CD4-positive, alpha-beta T cell (primary cell): ENCODE measurements at regions of chr19 and their contacts with region 1.

Region 1: GRCh38 chr19:11587302-11587974 is 9.8 kb upstream of the ZNF627 start:
- DNase-seq: peak; percentile 62 to 84 (median 72)
- ATAC-seq: peak; percentile 98
- H3K4me3 ChIP-seq: no peak overlapping the region
- H3K4me3 Mint-ChIP-seq: no peak overlapping the region
- H3K27ac ChIP-seq: no peak overlapping the region
- H3K27ac Mint-ChIP-seq: no peak overlapping the region
- H3K4me1 ChIP-seq: peaks cover 7% of the 10 kb centered on the region
- H3K4me1 Mint-ChIP-seq: no peaks in the 10 kb centered on the region
- H3K27me3 ChIP-seq: no peaks in the 10 kb centered on the region
- H3K27me3 Mint-ChIP-seq: no peaks in the 10 kb centered on the region
- CTCF ChIP-seq: peak; percentile 85

Region 2: GRCh38 chr19:9958379-9958821 is 1629.0 kb before region 1 on chr19:
- CTCF ChIA-PET with region 1: no interaction called
- POLR2A ChIA-PET with region 1: no interaction called
- intact Hi-C with region 1: no loop called
- DNase-seq: no peak
- ATAC-seq: no peak
- H3K4me3 ChIP-seq: no peak overlapping the region
- H3K4me3 Mint-ChIP-seq: no peak overlapping the region
- H3K27ac ChIP-seq: no peak overlapping the region
- H3K27ac Mint-ChIP-seq: no peak overlapping the region
- H3K4me1 ChIP-seq: no peaks in the 10 kb centered on the region
- H3K4me1 Mint-ChIP-seq: no peaks in the 10 kb centered on the region
- H3K27me3 ChIP-seq: peaks cover 0 to 4% of the 10 kb centered on the region in 2 experiments
- H3K27me3 Mint-ChIP-seq: peaks cover 19% of the 10 kb centered on the region
- CTCF ChIP-seq: no peak

Region 3: DNA sequence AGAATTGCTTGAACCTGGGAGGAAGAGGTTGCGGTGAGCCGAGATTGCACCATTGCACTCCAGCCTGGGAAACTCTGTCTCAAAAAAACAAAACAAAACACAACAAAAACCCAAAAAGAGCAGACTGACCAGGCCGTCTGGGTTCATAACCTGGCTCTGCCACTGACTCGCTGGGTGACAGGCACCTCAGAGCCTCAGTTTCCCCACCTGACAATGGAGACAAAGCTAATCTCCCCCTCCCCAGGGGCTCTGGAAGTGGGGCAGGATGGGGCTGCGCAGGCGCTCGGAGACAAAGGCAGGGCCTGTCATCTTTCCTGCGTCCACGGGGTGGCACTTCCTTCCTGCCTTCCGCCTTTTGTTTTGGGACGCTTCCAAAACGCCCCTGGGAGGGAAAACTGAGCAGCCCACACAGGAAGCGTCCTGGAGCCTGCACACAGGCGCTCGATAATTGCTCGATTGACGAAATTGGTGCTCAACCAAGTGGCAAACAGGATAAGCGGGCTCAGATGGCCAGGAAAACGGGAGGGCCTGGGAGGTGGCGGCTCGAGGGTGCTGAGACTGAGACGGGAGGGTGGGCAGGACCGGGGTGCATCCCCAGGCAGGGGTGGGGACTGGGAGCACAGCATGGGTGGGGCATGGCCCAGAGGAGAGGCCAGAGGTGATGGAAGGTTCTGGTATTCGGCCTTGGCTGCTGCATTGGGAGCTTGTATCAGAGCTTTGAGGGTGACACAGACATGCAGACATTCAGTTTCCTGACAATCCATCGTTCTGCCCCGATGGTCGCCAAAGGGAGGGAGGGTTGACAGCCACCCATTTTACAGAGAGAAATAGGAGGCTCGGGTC is 449.7 kb before region 1 on chr19:
- CTCF ChIA-PET with region 1: no interaction called
- POLR2A ChIA-PET with region 1: no interaction called
- intact Hi-C with region 1: loop called in 1 of 2 experiments (anchors 10 kb)
- DNase-seq: peak; percentile 27 to 80 (median 49)
- ATAC-seq: peak; percentile 92
- H3K4me3 ChIP-seq: peak overlapping the region; percentile 51
- H3K4me3 Mint-ChIP-seq: peak overlapping the region; percentile 83
- H3K27ac ChIP-seq: no peak overlapping the region
- H3K27ac Mint-ChIP-seq: peak overlapping the region; percentile 8
- H3K4me1 ChIP-seq: peaks cover 25% of the 10 kb centered on the region
- H3K4me1 Mint-ChIP-seq: peaks cover 8% of the 10 kb centered on the region
- H3K27me3 ChIP-seq: no peaks in the 10 kb centered on the region
- H3K27me3 Mint-ChIP-seq: no peaks in the 10 kb centered on the region
- CTCF ChIP-seq: peak; percentile 74

Region 4: GRCh38 chr19:11293433-11294389 is 293.7 kb before region 1 on chr19:
- CTCF ChIA-PET with region 1: no interaction called
- POLR2A ChIA-PET with region 1: no interaction called
- intact Hi-C with region 1: loop called (anchors 1 to 2 kb)
- DNase-seq: peak; percentile 57 to 87 (median 77)
- ATAC-seq: peak; percentile 98
- H3K4me3 ChIP-seq: no peak overlapping the region
- H3K4me3 Mint-ChIP-seq: no peak overlapping the region
- H3K27ac ChIP-seq: no peak overlapping the region
- H3K27ac Mint-ChIP-seq: no peak overlapping the region
- H3K4me1 ChIP-seq: peaks cover 11% of the 10 kb centered on the region
- H3K4me1 Mint-ChIP-seq: peaks cover 9% of the 10 kb centered on the region
- H3K27me3 ChIP-seq: peaks cover 14 to 16% of the 10 kb centered on the region in 2 experiments
- H3K27me3 Mint-ChIP-seq: peaks cover 39% of the 10 kb centered on the region
- CTCF ChIP-seq: peak; percentile 86

Region 5: DNA sequence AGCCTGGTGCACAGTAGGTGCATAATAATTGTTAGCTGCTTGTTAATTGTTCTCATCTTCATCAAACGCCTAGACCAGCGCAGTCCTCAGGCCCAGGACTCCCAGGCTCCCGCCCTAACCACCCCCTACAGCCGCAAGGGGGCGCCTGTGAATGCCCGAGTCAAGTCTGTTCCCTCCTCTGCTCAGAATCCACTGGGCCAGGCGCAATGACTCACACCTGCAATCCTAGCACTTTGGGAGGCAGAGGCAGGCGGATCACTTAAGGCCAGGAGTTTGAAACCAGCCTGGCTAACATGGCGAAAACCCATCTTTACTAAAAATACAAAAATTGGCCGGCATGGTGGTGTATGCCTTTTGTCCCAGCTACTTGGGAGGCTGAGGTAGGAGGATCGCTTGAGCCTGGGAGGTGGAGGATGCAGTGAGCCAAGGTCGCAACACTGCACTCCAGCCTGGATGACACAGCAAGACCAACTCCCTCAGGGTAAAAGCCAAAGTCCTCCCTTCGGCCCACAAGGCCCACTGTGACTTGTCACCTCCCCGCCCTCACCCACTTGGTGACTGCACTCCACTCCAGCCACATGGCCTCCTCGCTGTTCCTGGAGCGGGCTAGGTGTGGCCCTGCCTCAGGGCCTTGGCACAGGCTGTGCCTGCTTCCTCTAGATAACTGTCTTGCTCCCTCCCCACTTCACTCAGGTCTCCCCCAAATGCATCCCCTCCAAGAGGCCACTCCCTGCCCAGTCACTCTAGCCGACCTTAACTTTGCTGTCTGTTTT is 90.9 kb before region 1 on chr19:
- CTCF ChIA-PET with region 1: no interaction called
- POLR2A ChIA-PET with region 1: no interaction called
- intact Hi-C with region 1: loop called (anchors 1 to 2 kb)
- DNase-seq: peak; percentile 37 to 74 (median 55)
- ATAC-seq: peak; percentile 75
- H3K4me3 ChIP-seq: no peak overlapping the region
- H3K4me3 Mint-ChIP-seq: no peak overlapping the region
- H3K27ac ChIP-seq: no peak overlapping the region
- H3K27ac Mint-ChIP-seq: no peak overlapping the region
- H3K4me1 ChIP-seq: no peaks in the 10 kb centered on the region
- H3K4me1 Mint-ChIP-seq: no peaks in the 10 kb centered on the region
- H3K27me3 ChIP-seq: no peaks in the 10 kb centered on the region
- H3K27me3 Mint-ChIP-seq: no peaks in the 10 kb centered on the region
- CTCF ChIP-seq: peak; percentile 58

Region 6: GRCh38 chr19:11558881-11559828 is 28.3 kb before region 1 on chr19 and contains the start of gene ELOF1:
- CTCF ChIA-PET with region 1: interaction called, 3 read pairs
- POLR2A ChIA-PET with region 1: interaction called, 8 read pairs
- intact Hi-C with region 1: loop called (anchors 1 kb)
- DNase-seq: peak; percentile 90 to 99 (median 96)
- ATAC-seq: peak; percentile 93
- H3K4me3 ChIP-seq: peak within 1 kb of the TSS; percentile 94
- H3K4me3 Mint-ChIP-seq: peak within 1 kb of the TSS; percentile 96
- H3K27ac ChIP-seq: peak within 1 kb of the TSS; percentile 47 to 64
- H3K27ac Mint-ChIP-seq: peak within 1 kb of the TSS; percentile 79
- H3K4me1 ChIP-seq: peaks cover 40% of the 10 kb centered on the region
- H3K4me1 Mint-ChIP-seq: peaks cover 41% of the 10 kb centered on the region
- H3K27me3 ChIP-seq: no peaks in the 10 kb centered on the region
- H3K27me3 Mint-ChIP-seq: no peaks in the 10 kb centered on the region
- CTCF ChIP-seq: no peak
- total RNA-seq, gene ELOF1: 31.8 to 33.2 TPM

Region 7: DNA sequence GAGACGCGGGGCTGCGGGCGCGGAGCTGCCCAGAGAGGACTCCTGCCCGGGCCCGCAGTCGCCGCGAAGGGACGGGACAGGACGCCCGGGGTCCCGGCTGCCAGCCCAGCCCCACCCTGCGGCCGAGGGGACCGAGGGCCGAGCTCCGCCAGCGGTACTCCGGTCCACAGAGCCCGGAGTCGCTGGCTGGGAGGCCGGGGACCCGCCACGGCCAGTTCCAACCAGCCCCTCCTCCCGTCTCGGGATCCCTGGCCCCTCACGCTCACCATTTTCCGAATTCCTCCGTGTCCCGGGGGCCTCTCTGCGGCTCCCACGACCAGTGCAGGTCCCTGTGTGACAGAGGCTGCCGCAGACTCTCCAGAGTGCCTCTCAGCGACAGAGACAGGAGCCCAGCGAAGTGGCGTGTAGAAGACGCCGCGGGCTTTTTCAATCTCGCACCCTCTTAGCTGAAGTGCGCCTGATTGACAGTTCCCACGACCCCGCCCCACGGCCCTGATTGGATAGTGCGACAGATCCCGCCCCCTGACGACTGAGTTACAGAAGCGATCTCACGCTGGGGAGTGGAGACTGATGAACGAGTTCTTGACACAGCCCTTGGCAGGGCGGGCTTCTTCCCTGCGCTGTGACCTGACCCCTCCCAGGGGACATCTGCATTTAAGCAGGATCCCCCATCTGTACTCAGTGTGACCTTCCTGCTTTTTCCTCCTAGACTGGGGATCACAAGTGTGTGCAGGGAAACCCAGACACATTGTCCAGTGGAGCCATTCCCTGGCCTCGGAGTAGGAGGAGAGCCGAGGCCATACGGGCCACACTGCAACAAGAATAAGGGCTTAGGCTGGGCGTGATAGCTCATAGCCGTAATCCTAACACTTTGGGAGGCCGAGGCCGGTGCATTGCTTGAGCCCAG is 107.3 kb after region 1 on chr19:
- CTCF ChIA-PET with region 1: no interaction called
- POLR2A ChIA-PET with region 1: no interaction called
- intact Hi-C with region 1: no loop called
- DNase-seq: peak; percentile 51 to 87 (median 74)
- ATAC-seq: peak; percentile 99
- H3K4me3 ChIP-seq: peak overlapping the region; percentile 60
- H3K4me3 Mint-ChIP-seq: peak overlapping the region; percentile 96
- H3K27ac ChIP-seq: no peak overlapping the region
- H3K27ac Mint-ChIP-seq: no peak overlapping the region
- H3K4me1 ChIP-seq: peaks cover 18% of the 10 kb centered on the region
- H3K4me1 Mint-ChIP-seq: peaks cover 16% of the 10 kb centered on the region
- H3K27me3 ChIP-seq: peaks cover 24 to 32% of the 10 kb centered on the region in 2 experiments
- H3K27me3 Mint-ChIP-seq: peaks cover 42% of the 10 kb centered on the region
- CTCF ChIP-seq: no peak